T-cell (primary cell): ENCODE measurements at regions of chr13 and their contacts with region 1.

Region 1: GRCh38 chr13:99176309-99177276 is 24.1 kb upstream of the UBAC2 start:
- DNase-seq: peak; percentile 33 to 90 (median 72)
- ATAC-seq: peak; percentile 85 to 91 (median 89)
- H3K4me3 ChIP-seq: peak overlapping the region in 1 of 2 donors; percentile 18
- H3K4me3 Mint-ChIP-seq: peak overlapping the region; percentile 48 to 54 (median 52)
- H3K27ac ChIP-seq: no peak overlapping the region
- H3K27ac Mint-ChIP-seq: peak overlapping the region; percentile 49 to 52
- H3K4me1 ChIP-seq: peaks cover 18 to 39% of the 10 kb centered on the region in 2 experiments
- H3K4me1 Mint-ChIP-seq: peaks cover 37 to 45% (median 43%) of the 10 kb centered on the region in 3 donors
- H3K27me3 ChIP-seq: no peaks in the 10 kb centered on the region
- H3K27me3 Mint-ChIP-seq: peaks cover 0 to 4% of the 10 kb centered on the region in 2 donors

Region 2: DNA sequence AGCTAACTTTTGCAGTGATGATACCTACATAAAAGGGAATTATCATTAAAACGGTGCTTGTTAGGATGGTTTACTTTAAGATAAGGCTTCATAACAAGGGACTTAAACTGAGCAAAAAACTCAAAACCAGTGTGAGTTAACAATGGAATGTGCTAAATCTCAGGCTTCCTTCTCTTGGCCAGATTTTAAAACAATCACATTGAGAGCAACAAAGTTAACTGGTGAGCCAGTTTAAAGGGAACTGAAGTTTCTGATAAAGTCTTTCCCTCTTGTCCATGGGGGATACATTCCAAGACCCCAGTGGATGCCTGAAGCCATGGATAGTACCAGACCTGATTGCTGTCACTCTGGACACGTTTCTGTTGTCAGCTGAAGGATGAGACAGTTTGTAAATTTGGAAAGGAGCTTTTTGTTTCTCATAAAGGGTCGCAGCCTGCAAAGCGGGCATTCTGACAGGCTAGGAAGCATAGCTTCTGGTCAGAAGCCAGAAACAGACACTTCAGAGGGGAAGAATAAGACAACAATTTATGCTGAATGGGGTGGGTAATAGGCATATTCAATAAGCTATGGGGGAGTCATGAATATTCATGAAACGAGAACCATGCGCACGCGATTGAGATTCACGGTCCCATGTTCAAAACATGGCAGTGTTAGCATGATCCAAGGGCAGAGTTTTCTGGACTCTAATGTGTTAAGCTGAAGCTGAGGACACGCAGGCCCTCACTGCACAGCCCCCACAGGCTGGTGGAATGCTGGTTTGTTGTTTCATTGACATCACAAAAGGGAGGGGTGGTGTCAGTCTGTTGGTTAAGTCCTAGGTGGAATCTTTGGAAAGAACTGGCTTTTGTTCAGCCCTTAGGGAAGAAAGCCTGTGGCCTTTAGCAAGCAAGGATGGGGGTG is 849.0 kb before region 1 on chr13:
- CTCF ChIA-PET with region 1: no interaction called
- POLR2A ChIA-PET with region 1: no interaction called
- DNase-seq: no peak
- ATAC-seq: no peak
- H3K4me3 ChIP-seq: no peak overlapping the region
- H3K4me3 Mint-ChIP-seq: no peak overlapping the region
- H3K27ac ChIP-seq: no peak overlapping the region
- H3K27ac Mint-ChIP-seq: no peak overlapping the region
- H3K4me1 ChIP-seq: no peaks in the 10 kb centered on the region
- H3K4me1 Mint-ChIP-seq: no peaks in the 10 kb centered on the region
- H3K27me3 ChIP-seq: peaks cover 0 to 9% of the 10 kb centered on the region in 2 experiments
- H3K27me3 Mint-ChIP-seq: peaks cover 12 to 25% of the 10 kb centered on the region in 2 donors

Region 3: DNA sequence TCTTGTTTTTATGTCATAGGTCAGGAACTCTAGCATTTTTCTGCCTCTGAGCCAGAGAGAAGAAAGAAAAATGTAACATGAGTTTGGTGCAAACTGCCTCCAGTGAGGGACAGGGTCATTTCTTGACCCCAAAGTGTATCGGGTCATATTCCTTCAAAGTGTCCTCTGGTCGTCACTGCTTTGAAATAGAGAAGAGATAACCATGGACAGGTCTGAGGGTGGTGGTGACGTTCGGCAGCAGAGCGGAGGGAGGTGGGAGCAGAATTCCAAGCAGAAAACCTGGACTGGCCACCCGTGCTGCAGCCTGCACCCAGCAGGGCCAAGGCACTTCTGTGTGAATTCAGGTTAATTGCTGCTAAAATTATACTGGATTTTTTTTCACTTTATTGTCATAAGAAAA is 14.1 kb before region 1 on chr13:
- CTCF ChIA-PET with region 1: interaction called, 5 to 16 read pairs
- POLR2A ChIA-PET with region 1: no interaction called
- DNase-seq: no peak
- ATAC-seq: no peak
- H3K4me3 ChIP-seq: no peak overlapping the region
- H3K4me3 Mint-ChIP-seq: no peak overlapping the region
- H3K27ac ChIP-seq: no peak overlapping the region
- H3K27ac Mint-ChIP-seq: no peak overlapping the region
- H3K4me1 ChIP-seq: no peaks in the 10 kb centered on the region
- H3K4me1 Mint-ChIP-seq: no peaks in the 10 kb centered on the region
- H3K27me3 ChIP-seq: peaks cover 0 to 3% of the 10 kb centered on the region in 2 experiments
- H3K27me3 Mint-ChIP-seq: peaks cover 9 to 10% of the 10 kb centered on the region in 2 donors

Region 4: DNA sequence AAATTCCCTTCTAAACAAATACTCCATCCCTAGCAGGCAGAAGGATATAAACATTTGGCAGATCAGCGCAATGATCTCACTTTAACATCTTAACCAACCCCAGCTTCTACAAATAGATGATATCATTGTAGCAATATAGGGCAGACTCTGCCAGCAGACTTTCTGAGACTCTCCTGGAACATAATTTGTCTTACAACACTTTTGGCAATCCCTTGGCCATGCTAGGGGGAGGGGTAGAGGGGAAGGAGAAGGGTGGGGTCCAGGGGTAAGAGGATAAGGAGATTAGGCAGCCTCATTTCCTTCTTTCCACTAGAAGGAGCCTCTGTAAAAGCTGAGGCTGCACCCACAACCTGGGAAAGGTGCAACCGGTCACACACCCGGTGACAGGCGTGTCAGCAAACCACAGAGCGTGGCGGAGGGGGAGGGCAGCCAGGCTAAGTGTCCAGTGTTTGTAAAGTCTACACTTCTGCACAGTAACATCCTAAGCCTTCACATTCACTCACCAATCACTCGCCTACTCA is 15.3 kb after region 1 on chr13:
- CTCF ChIA-PET with region 1: interaction called, 6 to 10 read pairs
- POLR2A ChIA-PET with region 1: interaction called in 1 of 2 experiments, 3 read pairs
- DNase-seq: no peak
- ATAC-seq: no peak
- H3K4me3 ChIP-seq: no peak overlapping the region
- H3K4me3 Mint-ChIP-seq: no peak overlapping the region
- H3K27ac ChIP-seq: no peak overlapping the region
- H3K27ac Mint-ChIP-seq: peak overlapping the region; percentile 34 to 55
- H3K4me1 ChIP-seq: peaks cover 13 to 14% of the 10 kb centered on the region in 2 experiments
- H3K4me1 Mint-ChIP-seq: peaks cover 21 to 31% (median 21%) of the 10 kb centered on the region in 3 donors
- H3K27me3 ChIP-seq: no peaks in the 10 kb centered on the region
- H3K27me3 Mint-ChIP-seq: no peaks in the 10 kb centered on the region

Region 5: GRCh38 chr13:99258210-99258860 is 81.7 kb after region 1 on chr13 and contains the start of gene GPR18:
- CTCF ChIA-PET with region 1: interaction called, 14 to 246 read pairs
- POLR2A ChIA-PET with region 1: interaction called, 4 to 6 read pairs
- DNase-seq: peak in 23 of 35 experiments; percentile 15 to 74 (median 35)
- ATAC-seq: peak; percentile 81 to 92 (median 86)
- H3K4me3 ChIP-seq: peak within 1 kb of the TSS; percentile 54 to 76
- H3K4me3 Mint-ChIP-seq: peak within 1 kb of the TSS; percentile 89 to 93 (median 90)
- H3K27ac ChIP-seq: peak within 1 kb of the TSS; percentile 85
- H3K27ac Mint-ChIP-seq: peak within 1 kb of the TSS; percentile 92 to 93
- H3K4me1 ChIP-seq: peaks cover 30 to 53% of the 10 kb centered on the region in 2 experiments
- H3K4me1 Mint-ChIP-seq: peaks cover 65 to 82% (median 74%) of the 10 kb centered on the region in 3 donors
- H3K27me3 ChIP-seq: no peaks in the 10 kb centered on the region
- H3K27me3 Mint-ChIP-seq: no peaks in the 10 kb centered on the region
- total RNA-seq, gene GPR18: 15.2 to 26.7 (median 16.7) TPM

Region 6: DNA sequence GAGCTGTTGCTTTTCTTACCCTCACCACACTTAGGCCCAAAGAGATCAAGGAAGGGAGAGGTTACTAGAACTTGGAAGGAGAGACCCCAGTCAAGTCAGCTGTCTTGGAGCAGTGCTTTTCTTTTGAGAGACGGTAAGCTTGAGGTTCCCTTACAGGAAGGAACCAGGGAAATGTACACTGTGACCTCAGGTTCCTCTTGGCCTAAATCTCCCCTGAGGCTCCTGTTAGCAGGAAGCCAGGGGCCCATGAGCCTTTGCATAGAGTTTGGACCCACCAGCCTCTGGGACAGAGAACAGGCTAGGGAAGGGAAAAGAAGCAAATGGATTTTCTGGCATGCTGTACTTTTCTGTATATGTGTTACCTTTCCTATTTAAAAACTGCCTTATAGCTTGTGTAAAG is 87.5 kb after region 1 on chr13:
- CTCF ChIA-PET with region 1: interaction called, 45 to 246 read pairs
- POLR2A ChIA-PET with region 1: interaction called, 3 to 6 read pairs
- DNase-seq: peak in 1 of 35 experiments; percentile 42
- ATAC-seq: peak; percentile 34 to 45 (median 39)
- H3K4me3 ChIP-seq: no peak overlapping the region
- H3K4me3 Mint-ChIP-seq: no peak overlapping the region
- H3K27ac ChIP-seq: peak overlapping the region; percentile 47
- H3K27ac Mint-ChIP-seq: peak overlapping the region; percentile 80 to 89
- H3K4me1 ChIP-seq: peaks cover 37 to 43% of the 10 kb centered on the region in 2 experiments
- H3K4me1 Mint-ChIP-seq: peaks cover 63 to 68% (median 68%) of the 10 kb centered on the region in 3 donors
- H3K27me3 ChIP-seq: no peaks in the 10 kb centered on the region
- H3K27me3 Mint-ChIP-seq: no peaks in the 10 kb centered on the region

Region 7: GRCh38 chr13:99275093-99275469 is 98.5 kb after region 1 on chr13:
- CTCF ChIA-PET with region 1: interaction called, 11 to 246 read pairs
- POLR2A ChIA-PET with region 1: no interaction called
- DNase-seq: peak in 24 of 35 experiments; percentile 11 to 69 (median 32)
- ATAC-seq: peak; percentile 75 to 84 (median 82)
- H3K4me3 ChIP-seq: no peak overlapping the region
- H3K4me3 Mint-ChIP-seq: peak overlapping the region in 2 of 3 donors; percentile 22 to 61
- H3K27ac ChIP-seq: peak overlapping the region; percentile 87
- H3K27ac Mint-ChIP-seq: peak overlapping the region; percentile 89 to 92
- H3K4me1 ChIP-seq: peaks cover 38 to 68% of the 10 kb centered on the region in 2 experiments
- H3K4me1 Mint-ChIP-seq: peaks cover 94 to 96% (median 94%) of the 10 kb centered on the region in 3 donors
- H3K27me3 ChIP-seq: no peaks in the 10 kb centered on the region
- H3K27me3 Mint-ChIP-seq: no peaks in the 10 kb centered on the region

Region 8: DNA sequence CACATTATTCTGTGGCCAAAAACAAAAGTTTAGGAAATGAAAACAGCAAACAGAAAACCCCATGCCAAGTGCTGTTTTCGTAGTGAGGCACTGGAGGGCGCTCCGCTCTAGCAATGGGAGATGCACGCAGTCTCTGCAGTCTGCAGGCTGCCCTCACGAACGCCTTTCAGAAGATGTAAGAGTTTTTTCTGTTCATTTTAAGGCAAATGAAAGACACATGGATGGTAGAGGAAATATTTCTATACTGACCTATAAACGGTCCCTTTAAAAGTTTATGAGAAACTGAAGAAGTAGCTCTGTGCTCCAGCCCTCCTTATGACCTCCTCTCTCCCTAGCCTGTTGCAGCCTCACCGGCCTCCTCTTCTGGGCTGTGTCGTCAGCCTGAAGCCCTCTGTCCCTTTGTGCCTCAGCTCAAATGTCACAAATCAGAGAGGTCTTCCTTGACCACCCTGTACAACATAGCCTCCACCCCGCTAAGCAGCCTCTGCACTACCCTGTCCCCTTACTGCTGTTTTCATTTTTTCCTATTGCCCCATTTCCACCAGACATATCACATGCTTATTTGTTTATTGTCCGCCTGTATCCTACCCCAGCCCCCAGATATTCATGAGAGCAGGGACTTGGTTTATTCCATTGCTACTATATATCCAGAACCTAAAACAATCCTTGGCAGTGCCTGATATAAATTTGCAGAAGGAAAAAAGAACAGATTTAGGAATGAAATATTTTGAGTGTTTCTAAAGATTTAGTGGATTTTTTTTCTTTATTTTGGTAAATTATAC is 441.1 kb after region 1 on chr13:
- CTCF ChIA-PET with region 1: interaction called in 1 of 2 experiments, 11 read pairs
- POLR2A ChIA-PET with region 1: no interaction called
- DNase-seq: peak in 14 of 35 experiments; percentile 5 to 41 (median 24)
- ATAC-seq: no peak
- H3K4me3 ChIP-seq: no peak overlapping the region
- H3K4me3 Mint-ChIP-seq: no peak overlapping the region
- H3K27ac ChIP-seq: no peak overlapping the region
- H3K27ac Mint-ChIP-seq: no peak overlapping the region
- H3K4me1 ChIP-seq: peaks cover 2 to 6% of the 10 kb centered on the region in 2 experiments
- H3K4me1 Mint-ChIP-seq: peaks cover 26 to 34% (median 29%) of the 10 kb centered on the region in 3 donors
- H3K27me3 ChIP-seq: no peaks in the 10 kb centered on the region
- H3K27me3 Mint-ChIP-seq: no peaks in the 10 kb centered on the region